ENCODE measurements at regions of chr9 and their contacts with region 1.

Region 1: GRCh38 chr9:9603345-9603744 is 1009.5 kb downstream of the PTPRD start:
- DNase-seq: no peak
- ATAC-seq: no peak
- H3K4me3 ChIP-seq: no peak overlapping the region
- H3K27ac ChIP-seq: no peak overlapping the region
- H3K4me1 ChIP-seq: no peaks in the 10 kb centered on the region
- H3K27me3 ChIP-seq: no peaks in the 10 kb centered on the region
- CTCF ChIP-seq: no peak
- POLR2A ChIP-seq: no peak

Region 2: DNA sequence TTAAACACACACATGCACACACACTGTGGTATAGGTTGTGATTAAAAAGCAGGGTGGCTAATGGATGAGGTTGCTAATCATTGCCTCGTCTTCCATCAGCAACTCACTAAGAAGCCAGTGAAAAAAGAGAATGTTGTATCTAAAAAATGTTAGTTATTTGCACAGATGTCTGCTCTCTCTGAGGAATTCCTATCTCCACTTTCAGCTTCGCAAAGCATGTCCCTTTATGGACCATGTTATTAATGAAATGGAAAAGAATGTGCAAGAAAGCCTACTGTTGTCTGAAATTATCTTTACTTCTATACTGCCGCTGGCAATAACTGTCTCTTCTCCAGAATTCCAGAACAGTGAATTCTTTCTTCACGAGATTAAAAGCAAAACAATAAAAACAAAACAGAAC is 154.5 kb before region 1 on chr9:
- intact Hi-C with region 1: no loop called
- DNase-seq: no peak
- ATAC-seq: no peak
- H3K4me3 ChIP-seq: no peak overlapping the region
- H3K27ac ChIP-seq: no peak overlapping the region
- H3K4me1 ChIP-seq: no peaks in the 10 kb centered on the region
- H3K27me3 ChIP-seq: no peaks in the 10 kb centered on the region
- CTCF ChIP-seq: no peak
- POLR2A ChIP-seq: no peak

Region 3: DNA sequence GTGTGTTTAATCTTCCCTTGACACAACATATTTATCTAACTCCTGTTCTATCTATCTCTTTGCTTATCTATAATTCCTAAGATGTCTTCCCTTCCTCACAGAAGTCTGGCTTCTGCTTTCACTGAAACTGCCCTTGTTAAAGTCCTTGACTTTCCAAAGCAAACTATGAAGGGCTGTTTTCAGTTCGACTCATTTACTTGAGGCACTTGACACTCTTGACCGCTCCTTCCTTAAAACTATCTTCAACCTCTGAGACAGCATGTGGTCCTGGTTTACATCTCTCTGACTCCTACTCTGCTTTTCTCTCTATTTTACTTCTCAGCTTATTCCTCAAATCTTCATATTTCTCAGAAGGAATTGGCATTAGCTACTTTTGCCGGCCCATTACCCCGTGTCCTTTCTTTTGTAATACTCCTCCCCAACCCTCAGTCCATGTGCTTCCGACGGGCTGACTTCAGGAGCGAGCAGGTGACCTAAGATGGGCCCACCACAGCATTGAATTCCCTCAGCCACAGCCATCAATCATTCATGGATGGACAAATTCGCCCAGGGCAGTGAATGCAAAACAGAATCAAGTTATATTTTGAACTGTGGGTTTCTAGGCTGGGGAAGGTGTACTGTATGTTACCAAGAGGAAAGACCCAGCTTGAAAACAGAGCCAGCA is 79.7 kb before region 1 on chr9:
- intact Hi-C with region 1: no loop called
- DNase-seq: no peak
- ATAC-seq: no peak
- H3K4me3 ChIP-seq: no peak overlapping the region
- H3K27ac ChIP-seq: no peak overlapping the region
- H3K4me1 ChIP-seq: no peaks in the 10 kb centered on the region
- H3K27me3 ChIP-seq: no peaks in the 10 kb centered on the region
- CTCF ChIP-seq: no peak
- POLR2A ChIP-seq: no peak

Region 4: GRCh38 chr9:9771314-9771713 is 168.0 kb after region 1 on chr9:
- intact Hi-C with region 1: no loop called
- DNase-seq: no peak
- ATAC-seq: no peak
- H3K4me3 ChIP-seq: no peak overlapping the region
- H3K27ac ChIP-seq: no peak overlapping the region
- H3K4me1 ChIP-seq: no peaks in the 10 kb centered on the region
- H3K27me3 ChIP-seq: no peaks in the 10 kb centered on the region
- CTCF ChIP-seq: no peak
- POLR2A ChIP-seq: no peak

Region 5: DNA sequence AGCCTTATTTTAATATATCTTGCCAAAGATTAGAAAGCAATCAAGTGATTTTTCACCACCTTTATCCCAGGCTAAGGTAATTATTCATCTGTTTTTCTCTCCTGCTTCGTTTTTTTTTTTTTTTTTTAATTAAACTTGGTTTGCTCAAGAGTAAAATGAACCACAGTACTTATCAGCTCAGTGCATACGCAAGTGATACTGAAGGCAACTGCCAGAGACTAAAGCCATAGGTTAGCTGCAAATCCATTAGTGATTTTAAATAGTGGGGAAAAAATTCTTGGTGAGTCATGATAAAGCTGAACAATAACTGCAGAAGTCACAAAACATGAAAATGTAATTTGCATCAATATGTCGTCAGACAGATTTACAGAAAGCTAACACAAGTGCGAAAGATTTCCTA is 180.4 kb after region 1 on chr9:
- intact Hi-C with region 1: loop called in 1 of 10 experiments (anchors 10 kb)
- DNase-seq: no peak
- ATAC-seq: no peak
- H3K4me3 ChIP-seq: no peak overlapping the region
- H3K27ac ChIP-seq: no peak overlapping the region
- H3K4me1 ChIP-seq: no peaks in the 10 kb centered on the region
- H3K27me3 ChIP-seq: no peaks in the 10 kb centered on the region
- CTCF ChIP-seq: no peak
- POLR2A ChIP-seq: no peak

Region 6: GRCh38 chr9:9790216-9790872 is 187.0 kb after region 1 on chr9:
- intact Hi-C with region 1: loop called in 4 of 10 experiments (anchors 10 kb)
- DNase-seq: no peak
- ATAC-seq: no peak
- H3K4me3 ChIP-seq: no peak overlapping the region
- H3K27ac ChIP-seq: no peak overlapping the region
- H3K4me1 ChIP-seq: no peaks in the 10 kb centered on the region
- H3K27me3 ChIP-seq: no peaks in the 10 kb centered on the region
- CTCF ChIP-seq: peak; percentile 9 to 65 (median 38)
- POLR2A ChIP-seq: no peak

Region 7: GRCh38 chr9:9942764-9943424 is 339.5 kb after region 1 on chr9:
- intact Hi-C with region 1: loop called in 3 of 10 experiments (anchors 5 to 10 kb)
- DNase-seq: peak in 4 of 5 donors; percentile 13 to 43 (median 30)
- ATAC-seq: peak in 2 of 4 donors; percentile 58
- H3K4me3 ChIP-seq: no peak overlapping the region
- H3K27ac ChIP-seq: no peak overlapping the region
- H3K4me1 ChIP-seq: no peaks in the 10 kb centered on the region
- H3K27me3 ChIP-seq: no peaks in the 10 kb centered on the region
- CTCF ChIP-seq: peak; percentile 79 to 94 (median 86)
- POLR2A ChIP-seq: no peak